ENCODE measurements at regions of chr4 and their contacts with region 1.

Region 1: GRCh38 chr4:86603311-86603885 is 9.3 kb downstream of the PTPN13 start:
- DNase-seq: no peak
- ATAC-seq: peak; percentile 40
- H3K4me3 ChIP-seq: no peak overlapping the region
- H3K27ac ChIP-seq: no peak overlapping the region
- H3K4me1 ChIP-seq: no peaks in the 10 kb centered on the region
- H3K27me3 ChIP-seq: no peaks in the 10 kb centered on the region
- CTCF ChIP-seq: no peak
- EP300 ChIP-seq: no peak
- POLR2A ChIP-seq: no peak
- RAD21 ChIP-seq: no peak

Region 2: DNA sequence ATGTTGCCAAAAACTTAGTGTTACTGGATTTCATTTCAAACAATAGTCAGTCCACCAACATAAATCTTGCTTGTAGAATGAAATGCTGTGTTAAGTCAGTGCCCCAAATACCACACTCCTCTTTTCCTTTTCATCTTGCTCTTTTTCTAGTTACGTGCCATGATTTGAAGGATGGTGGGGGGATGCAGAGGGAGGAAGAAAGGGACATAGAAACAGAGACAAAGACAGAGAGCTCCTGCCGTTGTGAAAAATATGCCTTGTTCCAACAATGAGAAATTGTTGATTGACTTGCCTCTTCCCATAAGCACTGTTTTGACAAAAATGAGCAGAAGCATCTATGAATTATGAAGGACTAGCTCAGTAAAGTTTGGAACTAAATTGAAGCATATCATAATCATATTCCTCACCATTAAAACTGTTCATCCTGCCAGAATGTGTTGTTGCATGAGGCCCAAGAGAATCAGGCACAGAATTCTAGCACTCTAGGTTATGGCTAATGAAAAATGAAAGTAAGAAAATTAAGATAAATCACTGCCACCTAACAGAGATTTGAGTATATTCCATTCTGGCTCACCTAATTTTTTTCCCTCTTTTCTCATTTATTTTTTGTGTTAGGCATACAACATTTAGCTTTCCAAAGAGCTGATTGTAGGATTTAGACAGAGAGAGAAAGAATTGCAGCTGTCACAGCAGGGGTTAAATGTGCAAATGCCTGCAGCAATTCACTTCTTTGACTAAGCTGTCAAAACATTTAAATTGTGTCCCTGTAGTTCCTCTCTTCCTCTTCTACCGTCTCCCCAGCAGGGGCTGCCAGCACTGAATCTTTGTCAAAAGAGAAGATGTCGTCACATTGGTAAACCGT is 120.9 kb before region 1 on chr4:
- CTCF ChIA-PET with region 1: no interaction called
- POLR2A ChIA-PET with region 1: no interaction called
- RAD21 ChIA-PET with region 1: no interaction called
- SMC1A ChIA-PET with region 1: no interaction called
- in situ Hi-C with region 1: no loop called
- intact Hi-C with region 1: no loop called
- DNase-seq: no peak
- ATAC-seq: peak; percentile 56; the same call in 2 of the 3 replicates
- H3K4me3 ChIP-seq: no peak overlapping the region
- H3K27ac ChIP-seq: no peak overlapping the region
- H3K4me1 ChIP-seq: no peaks in the 10 kb centered on the region
- H3K27me3 ChIP-seq: no peaks in the 10 kb centered on the region
- CTCF ChIP-seq: 0 out of 6 replicates have a peak, but pooled peaks of 1 of the 3 experiments have one; percentile 0
- EP300 ChIP-seq: no peak
- POLR2A ChIP-seq: no peak
- RAD21 ChIP-seq: peak; percentile 13; the same call in 1 of the 2 replicates

Region 3: GRCh38 chr4:86564795-86565194 is 38.6 kb before region 1 on chr4:
- CTCF ChIA-PET with region 1: interaction called, 10 read pairs
- POLR2A ChIA-PET with region 1: interaction called, 3 read pairs
- RAD21 ChIA-PET with region 1: interaction called, 5 read pairs
- SMC1A ChIA-PET with region 1: interaction called, 7 read pairs
- in situ Hi-C with region 1: no loop called
- intact Hi-C with region 1: no loop called
- DNase-seq: no peak
- ATAC-seq: peak; percentile 52
- H3K4me3 ChIP-seq: no peak overlapping the region
- H3K27ac ChIP-seq: no peak overlapping the region
- H3K4me1 ChIP-seq: no peaks in the 10 kb centered on the region; the same call in 1 of the 2 replicates
- H3K27me3 ChIP-seq: no peaks in the 10 kb centered on the region
- CTCF ChIP-seq: peak in 1 of 3 experiments; percentile 50; a peak in 2 of 6 replicates
- EP300 ChIP-seq: no peak
- POLR2A ChIP-seq: no peak
- RAD21 ChIP-seq: peak; percentile 56; the same call in 1 of the 2 replicates

Region 4: DNA sequence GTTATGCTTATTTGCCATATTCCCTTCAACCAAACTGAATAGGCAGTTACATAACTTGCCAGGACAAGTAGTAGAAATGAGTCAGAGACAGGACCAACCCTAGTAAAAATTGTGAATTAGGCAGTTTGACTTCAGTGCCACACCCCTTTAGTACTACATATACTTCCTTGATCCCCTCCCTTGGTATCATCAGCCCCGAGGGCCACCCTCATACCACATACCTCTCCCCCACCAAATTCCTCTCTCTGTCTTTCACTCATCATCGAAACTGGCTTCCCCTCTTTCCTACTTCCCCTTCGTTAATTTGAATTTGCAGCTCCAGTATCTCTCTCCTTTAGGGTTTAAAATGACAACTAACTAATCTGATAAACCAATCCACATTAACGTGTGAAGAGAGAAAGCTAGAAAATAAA is 17.2 kb before region 1 on chr4:
- CTCF ChIA-PET with region 1: interaction called, 6 read pairs
- POLR2A ChIA-PET with region 1: interaction called, 7 read pairs
- RAD21 ChIA-PET with region 1: interaction called, 15 read pairs
- SMC1A ChIA-PET with region 1: interaction called, 209 read pairs
- in situ Hi-C with region 1: no loop called
- intact Hi-C with region 1: no loop called
- DNase-seq: no peak
- ATAC-seq: peak; percentile 76
- H3K4me3 ChIP-seq: no peak overlapping the region
- H3K27ac ChIP-seq: no peak overlapping the region
- H3K4me1 ChIP-seq: 0 out of 2 replicates have a peak, but pooled peaks cover 3% of the 10 kb centered on the region
- H3K27me3 ChIP-seq: no peaks in the 10 kb centered on the region
- CTCF ChIP-seq: no peak
- EP300 ChIP-seq: 0 out of 4 replicates have a peak, but pooled peaks of 1 of the 2 experiments have one; percentile 21
- POLR2A ChIP-seq: no peak
- RAD21 ChIP-seq: no peak

Region 5: DNA sequence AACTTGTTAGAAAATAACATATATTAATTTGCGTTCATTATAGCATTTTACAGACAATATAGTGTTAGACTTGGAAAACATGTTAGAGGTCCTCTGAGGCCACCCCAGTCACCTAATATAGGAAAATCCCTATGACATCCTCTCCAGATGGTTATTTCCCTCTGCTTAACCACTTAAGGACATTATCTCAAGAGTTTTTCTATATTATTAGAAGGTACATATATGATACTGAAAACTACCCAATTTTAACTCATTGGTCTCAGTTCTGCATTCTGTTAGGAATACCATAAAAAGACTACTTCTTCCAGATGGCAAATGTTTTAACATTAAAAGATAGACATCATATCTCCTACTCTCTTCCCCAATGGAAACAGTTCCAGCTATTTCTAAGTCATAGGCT is 12.1 kb after region 1 on chr4:
- CTCF ChIA-PET with region 1: interaction called, 5 read pairs
- POLR2A ChIA-PET with region 1: interaction called, 4 read pairs
- RAD21 ChIA-PET with region 1: interaction called, 8 read pairs
- SMC1A ChIA-PET with region 1: interaction called, 71 read pairs
- in situ Hi-C with region 1: no loop called
- intact Hi-C with region 1: no loop called
- DNase-seq: no peak
- ATAC-seq: peak; percentile 71
- H3K4me3 ChIP-seq: no peak overlapping the region
- H3K27ac ChIP-seq: no peak overlapping the region
- H3K4me1 ChIP-seq: no peaks in the 10 kb centered on the region
- H3K27me3 ChIP-seq: 0 out of 4 replicates have a peak, but pooled peaks cover 0 to 1% of the 10 kb centered on the region in 2 experiments
- CTCF ChIP-seq: no peak
- EP300 ChIP-seq: peak in 1 of 2 experiments; percentile 58; a peak in 1 of 4 replicates
- POLR2A ChIP-seq: no peak
- RAD21 ChIP-seq: no peak

Region 6: GRCh38 chr4:86633854-86634253 is 30.5 kb after region 1 on chr4:
- CTCF ChIA-PET with region 1: interaction called, 4 read pairs
- POLR2A ChIA-PET with region 1: interaction called, 6 read pairs
- RAD21 ChIA-PET with region 1: interaction called, 4 read pairs
- SMC1A ChIA-PET with region 1: interaction called, 23 read pairs
- in situ Hi-C with region 1: no loop called
- intact Hi-C with region 1: no loop called
- DNase-seq: no peak
- ATAC-seq: 0 out of 3 replicates have a peak, but pooled peaks have one; percentile 16
- H3K4me3 ChIP-seq: no peak overlapping the region
- H3K27ac ChIP-seq: no peak overlapping the region
- H3K4me1 ChIP-seq: no peaks in the 10 kb centered on the region
- H3K27me3 ChIP-seq: no peaks in the 10 kb centered on the region
- CTCF ChIP-seq: no peak
- EP300 ChIP-seq: no peak
- POLR2A ChIP-seq: no peak
- RAD21 ChIP-seq: no peak

Region 7: GRCh38 chr4:86640469-86640868 is 37.1 kb after region 1 on chr4:
- CTCF ChIA-PET with region 1: interaction called, 4 read pairs
- POLR2A ChIA-PET with region 1: interaction called, 6 read pairs
- RAD21 ChIA-PET with region 1: interaction called, 16 read pairs
- SMC1A ChIA-PET with region 1: interaction called, 23 read pairs
- in situ Hi-C with region 1: no loop called
- intact Hi-C with region 1: no loop called
- DNase-seq: no peak
- ATAC-seq: peak; percentile 62
- H3K4me3 ChIP-seq: no peak overlapping the region
- H3K27ac ChIP-seq: no peak overlapping the region
- H3K4me1 ChIP-seq: no peaks in the 10 kb centered on the region
- H3K27me3 ChIP-seq: no peaks in the 10 kb centered on the region
- CTCF ChIP-seq: no peak
- EP300 ChIP-seq: no peak
- POLR2A ChIP-seq: no peak
- RAD21 ChIP-seq: no peak

Region 8: DNA sequence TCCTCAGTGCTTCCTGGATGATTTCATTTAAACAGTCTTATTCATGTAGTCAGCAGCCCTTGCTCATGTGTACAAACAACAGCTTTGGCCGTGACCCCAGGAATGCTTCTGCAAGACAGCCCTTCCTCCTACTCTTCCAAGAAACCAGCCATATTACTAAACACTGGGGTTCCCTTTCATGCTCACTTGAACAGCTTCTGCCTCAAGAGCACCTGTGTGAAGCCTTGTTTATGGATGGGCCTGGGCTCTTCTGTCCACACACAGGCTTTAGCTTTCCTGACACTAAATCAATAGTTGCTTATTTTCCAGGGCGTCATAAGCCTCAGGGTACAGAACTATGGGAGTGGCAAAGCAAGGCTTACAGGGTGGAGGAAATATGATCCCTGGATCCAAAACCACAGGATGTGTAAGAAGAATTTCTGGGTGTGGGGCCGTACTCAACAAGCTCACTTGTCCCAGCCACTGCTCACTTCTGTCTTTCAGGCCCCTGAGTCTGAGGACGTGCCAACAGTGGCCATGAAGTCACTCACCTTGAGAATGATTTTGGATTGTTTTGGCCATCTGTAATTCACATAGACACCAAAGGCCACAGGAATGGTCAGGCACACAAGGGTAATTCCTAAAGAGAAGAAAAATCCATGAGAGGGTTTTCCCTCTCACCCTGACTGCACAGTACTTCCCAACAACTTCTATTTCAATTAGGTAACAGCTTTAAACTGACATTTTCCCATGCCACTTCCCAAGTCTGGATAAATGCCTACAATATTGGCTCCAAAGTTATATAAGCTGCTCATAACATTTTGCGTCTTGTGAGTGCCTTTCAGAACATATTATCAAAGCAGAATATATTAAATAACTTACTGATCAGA is 228.1 kb after region 1 on chr4:
- CTCF ChIA-PET with region 1: no interaction called
- POLR2A ChIA-PET with region 1: no interaction called
- RAD21 ChIA-PET with region 1: no interaction called
- SMC1A ChIA-PET with region 1: no interaction called
- in situ Hi-C with region 1: no loop called
- intact Hi-C with region 1: no loop called
- DNase-seq: no peak
- ATAC-seq: no peak
- H3K4me3 ChIP-seq: no peak overlapping the region
- H3K27ac ChIP-seq: no peak overlapping the region
- H3K4me1 ChIP-seq: no peaks in the 10 kb centered on the region
- H3K27me3 ChIP-seq: no peaks in the 10 kb centered on the region
- CTCF ChIP-seq: no peak
- EP300 ChIP-seq: no peak
- POLR2A ChIP-seq: no peak
- RAD21 ChIP-seq: no peak